Lower leg skin (tissue), 4 donors: ENCODE measurements at regions of chr11 and their contacts with region 1.

Region 1: GRCh38 chr11:5288906-5289550 is 12.7 kb downstream of the OR51B4 start:
- DNase-seq: no peak
- H3K4me3 ChIP-seq: no peak overlapping the region
- CTCF ChIP-seq: no peak
- POLR2A ChIP-seq: no peak

Region 2: DNA sequence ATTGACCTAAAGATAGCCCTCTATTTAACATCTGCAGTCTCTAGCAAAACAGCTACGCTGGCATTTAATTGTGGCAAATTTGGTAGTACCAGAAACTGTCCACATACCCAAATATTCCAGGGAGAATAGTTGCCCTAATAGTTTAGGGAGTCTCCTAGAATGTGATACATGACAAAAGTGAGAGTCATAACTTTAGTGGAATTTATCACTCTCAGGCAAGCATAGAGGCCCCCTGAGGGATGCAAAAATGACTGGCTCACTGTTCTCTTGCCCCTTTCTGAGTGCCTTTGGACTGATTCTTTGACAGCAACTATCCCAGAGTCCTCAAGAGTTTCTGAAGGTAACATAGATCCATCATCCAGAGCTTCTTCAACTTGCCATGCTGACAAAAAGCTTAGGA is 15.0 kb after region 1 on chr11:
- intact Hi-C with region 1: loop called (anchors 1 kb)
- DNase-seq: no peak
- H3K4me3 ChIP-seq: no peak overlapping the region
- CTCF ChIP-seq: no peak
- POLR2A ChIP-seq: no peak